Activated CD4-positive, alpha-beta memory T cell treated with anti-CD3 and anti-CD28 coated beads, Interleukin-2, amount 10 ng/mL, durations not matched to agents 7 days and 5 days (primary cell): ENCODE measurements at regions of chr5 and their contacts with region 1.

Region 1: DNA sequence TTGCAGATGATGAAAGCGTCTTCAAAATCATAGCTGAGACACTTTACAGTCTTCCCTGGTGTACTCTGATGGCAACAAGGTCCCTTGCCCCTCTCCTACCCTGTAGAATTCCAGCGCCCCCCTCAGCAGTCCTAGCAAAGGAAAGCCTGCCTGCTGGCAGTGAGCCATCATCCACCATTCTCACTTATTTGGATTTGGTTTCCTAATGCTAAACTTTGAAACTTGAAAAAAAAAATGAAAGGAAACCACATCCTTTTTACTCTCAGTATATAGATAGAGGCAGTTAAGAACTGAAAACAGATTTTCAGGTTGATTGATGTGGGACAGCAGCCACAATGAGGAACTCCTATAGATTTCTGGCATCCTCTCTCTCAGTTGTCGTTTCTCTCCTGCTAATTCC is at the start of gene GZMA:
- DNase-seq: peak; percentile 47
- H3K4me3 Mint-ChIP-seq: peak within 1 kb of the TSS; percentile 83
- H3K27ac Mint-ChIP-seq: peak within 1 kb of the TSS; percentile 93
- H3K4me1 Mint-ChIP-seq: peaks cover 81% of the 10 kb centered on the region
- H3K27me3 Mint-ChIP-seq: peaks cover 5% of the 10 kb centered on the region
- total RNA-seq, gene GZMA: 1,058 to 1,099 TPM

Region 2: DNA sequence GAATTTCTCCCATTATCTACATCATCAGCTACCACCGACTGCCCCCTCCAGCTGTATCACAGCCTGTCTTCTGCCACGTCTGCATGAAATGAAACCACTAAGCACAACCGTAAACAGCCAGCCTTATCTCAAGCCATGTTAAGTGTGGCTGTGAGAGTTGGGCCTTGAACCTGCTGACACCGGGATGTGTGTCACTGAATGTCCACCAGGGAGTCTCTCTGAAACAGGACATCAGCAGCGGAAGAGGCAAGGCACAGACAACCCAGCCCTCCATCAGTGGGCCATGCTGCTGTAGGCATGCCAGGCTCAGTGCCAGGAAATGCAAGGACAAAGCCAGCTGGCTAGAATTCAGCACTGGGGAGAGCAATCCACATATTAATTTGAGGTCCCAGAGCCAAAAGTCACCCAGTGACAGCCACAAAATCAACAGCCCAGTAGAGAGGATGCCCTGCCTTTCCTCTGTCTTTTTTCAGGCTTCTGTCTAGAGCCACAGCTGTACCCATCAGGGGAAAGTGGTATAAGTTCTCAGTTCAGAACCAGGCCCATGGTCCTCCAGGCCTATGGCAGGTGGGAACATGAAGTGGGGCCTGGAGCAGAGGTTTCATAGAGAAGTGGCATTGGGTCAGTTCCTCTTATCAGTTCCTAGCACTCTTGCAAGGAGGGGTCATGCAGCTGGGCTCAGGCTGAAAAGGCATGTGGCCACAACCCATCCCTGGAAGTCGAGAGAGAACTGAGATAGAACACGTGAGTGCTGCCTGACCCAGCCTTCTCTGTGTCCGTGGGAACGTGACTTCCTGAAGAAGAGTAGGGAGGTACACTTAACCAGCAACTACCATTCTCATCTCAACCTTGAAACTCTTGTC is 316.4 kb before region 1 on chr5:
- CTCF ChIA-PET with region 1: no interaction called
- POLR2A ChIA-PET with region 1: no interaction called
- DNase-seq: no peak
- H3K4me3 Mint-ChIP-seq: no peak overlapping the region
- H3K27ac Mint-ChIP-seq: no peak overlapping the region
- H3K4me1 Mint-ChIP-seq: no peaks in the 10 kb centered on the region
- H3K27me3 Mint-ChIP-seq: peaks cover 11% of the 10 kb centered on the region

Region 3: DNA sequence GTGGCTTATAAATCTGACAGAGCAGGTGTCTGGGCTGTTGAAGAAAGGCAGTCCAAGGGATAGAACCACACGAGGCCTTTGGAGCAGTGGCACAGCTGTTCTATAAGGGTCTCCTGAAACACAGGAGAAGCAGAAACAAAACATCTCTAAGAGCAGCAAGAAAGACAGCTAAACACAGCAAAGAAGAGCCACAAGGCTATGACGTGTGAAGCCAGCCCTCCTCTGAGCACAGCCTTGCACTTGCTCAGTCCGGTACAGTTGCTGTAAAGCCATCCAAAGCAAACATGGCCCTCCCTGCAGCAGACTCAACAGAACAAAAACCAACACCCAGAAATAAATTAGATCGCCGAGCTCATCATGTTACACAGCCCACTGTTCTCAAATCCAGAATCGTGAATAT is 80.9 kb before region 1 on chr5:
- CTCF ChIA-PET with region 1: interaction called, 3 read pairs
- POLR2A ChIA-PET with region 1: interaction called, 59 read pairs
- DNase-seq: no peak
- H3K4me3 Mint-ChIP-seq: no peak overlapping the region
- H3K27ac Mint-ChIP-seq: no peak overlapping the region
- H3K4me1 Mint-ChIP-seq: peaks cover 49% of the 10 kb centered on the region
- H3K27me3 Mint-ChIP-seq: no peaks in the 10 kb centered on the region

Region 4: GRCh38 chr5:55072666-55073065 is 29.7 kb before region 1 on chr5:
- CTCF ChIA-PET with region 1: interaction called, 3 read pairs
- POLR2A ChIA-PET with region 1: interaction called, 41 read pairs
- DNase-seq: no peak
- H3K4me3 Mint-ChIP-seq: peak overlapping the region; percentile 6
- H3K27ac Mint-ChIP-seq: peak overlapping the region; percentile 91
- H3K4me1 Mint-ChIP-seq: peaks cover 48% of the 10 kb centered on the region
- H3K27me3 Mint-ChIP-seq: no peaks in the 10 kb centered on the region

Region 5: DNA sequence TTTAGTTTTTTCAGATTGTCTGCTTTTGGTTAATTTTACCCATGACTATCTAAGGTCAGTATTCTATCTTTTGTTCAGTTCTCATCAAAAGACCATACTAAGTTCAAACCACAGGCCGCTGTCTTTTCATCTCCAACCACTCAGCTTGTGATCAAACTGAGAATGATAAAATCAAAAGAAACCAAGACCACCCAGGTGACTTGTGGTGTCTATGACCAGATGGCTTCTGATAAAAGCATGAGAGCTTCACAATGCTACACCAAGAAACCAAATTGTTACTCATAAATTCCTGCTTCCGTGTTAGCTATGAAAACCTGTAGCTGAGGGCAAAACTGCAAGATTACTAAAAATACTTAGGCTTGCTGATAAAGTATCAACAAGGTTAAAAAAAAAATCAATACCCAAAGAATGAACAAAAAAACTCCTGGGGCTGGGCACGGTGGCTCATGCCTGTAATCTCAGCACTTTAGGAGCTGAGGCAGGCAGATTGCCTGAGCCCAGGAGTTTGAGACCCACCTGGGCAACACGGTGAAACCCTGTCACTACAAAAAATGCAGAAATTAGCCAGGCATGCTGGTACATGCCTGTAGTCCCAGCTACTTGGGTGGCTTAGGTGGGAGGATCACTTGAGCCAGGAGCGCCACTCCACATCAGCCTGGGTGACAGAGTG is 31.8 kb after region 1 on chr5:
- CTCF ChIA-PET with region 1: interaction called, 6 read pairs
- POLR2A ChIA-PET with region 1: interaction called, 11 read pairs
- DNase-seq: peak; percentile 30
- H3K4me3 Mint-ChIP-seq: no peak overlapping the region
- H3K27ac Mint-ChIP-seq: peak overlapping the region; percentile 62
- H3K4me1 Mint-ChIP-seq: peaks cover 17% of the 10 kb centered on the region
- H3K27me3 Mint-ChIP-seq: peaks cover 25% of the 10 kb centered on the region

Region 6: DNA sequence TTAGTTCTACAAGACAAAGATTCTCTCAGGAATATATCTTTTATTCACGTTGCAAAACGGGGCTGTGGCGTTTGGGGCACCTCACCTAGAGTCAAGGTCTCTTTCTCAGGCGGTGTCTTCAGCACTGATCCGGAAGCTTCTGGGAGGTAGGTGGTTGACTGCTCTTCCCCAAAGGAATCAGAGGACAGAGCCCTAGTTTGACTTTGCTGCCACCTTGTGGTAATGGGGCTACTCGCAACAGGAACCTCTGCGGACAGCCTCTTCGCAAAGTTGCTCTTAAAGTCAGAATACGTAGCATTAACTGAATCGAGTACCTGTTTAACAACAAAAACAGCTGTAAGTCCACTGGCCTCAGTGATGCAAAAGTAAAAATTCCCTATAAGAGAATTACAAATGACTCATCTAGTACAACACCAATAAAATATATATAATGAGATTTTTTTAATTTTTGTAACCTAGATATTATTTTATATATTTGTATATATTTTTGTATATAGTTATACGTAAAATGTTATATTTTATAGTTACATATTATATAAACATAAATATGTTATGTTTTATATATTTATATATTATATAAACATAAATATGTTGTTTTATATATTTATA is 44.3 kb after region 1 on chr5:
- CTCF ChIA-PET with region 1: interaction called, 14 read pairs
- POLR2A ChIA-PET with region 1: interaction called, 20 read pairs
- DNase-seq: peak; percentile 89
- H3K4me3 Mint-ChIP-seq: no peak overlapping the region
- H3K27ac Mint-ChIP-seq: peak overlapping the region; percentile 3
- H3K4me1 Mint-ChIP-seq: peaks cover 31% of the 10 kb centered on the region
- H3K27me3 Mint-ChIP-seq: peaks cover 21% of the 10 kb centered on the region